ENCODE measurements at regions of chr7 and their contacts with region 1.

Region 1: GRCh38 chr7:158809596-158809995 is 19.7 kb downstream of the ESYT2 start:
- DNase-seq: peak in 2 of 9 experiments; percentile 34 to 55
- ATAC-seq: no peak
- H3K4me3 ChIP-seq: no peak overlapping the region
- H3K4me3 Mint-ChIP-seq: peak overlapping the region; percentile 31
- H3K27ac ChIP-seq: peak overlapping the region in 1 of 2 experiments; percentile 41
- H3K27ac Mint-ChIP-seq: peak overlapping the region; percentile 83
- H3K4me1 ChIP-seq: peaks cover 67% of the 10 kb centered on the region
- H3K4me1 Mint-ChIP-seq: peaks cover 77% of the 10 kb centered on the region
- H3K27me3 ChIP-seq: no peaks in the 10 kb centered on the region
- H3K27me3 Mint-ChIP-seq: no peaks in the 10 kb centered on the region
- CTCF ChIP-seq: no peak

Region 2: DNA sequence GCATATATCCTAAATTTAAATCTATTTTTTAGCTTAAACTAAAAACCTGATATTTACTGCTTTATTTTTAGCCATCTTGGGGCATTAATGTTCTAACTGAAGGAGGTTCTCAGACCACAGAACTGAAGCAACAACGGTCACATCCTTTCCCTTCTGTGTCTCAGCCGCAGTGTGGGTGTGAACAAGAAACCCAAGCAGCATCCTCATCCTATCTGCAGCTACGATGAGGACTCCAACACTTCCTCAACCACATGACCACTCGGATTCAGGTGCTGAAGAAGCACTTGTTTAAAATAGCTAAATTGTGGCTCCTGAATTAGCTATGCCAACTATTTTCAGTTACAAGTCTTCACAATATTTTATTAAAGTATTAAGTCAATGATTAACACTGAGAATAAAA is 14.4 kb after region 1 on chr7:
- CTCF ChIA-PET with region 1: interaction called, 7 read pairs
- POLR2A ChIA-PET with region 1: interaction called, 32 read pairs
- intact Hi-C with region 1: loop called (anchors 1 to 2 kb)
- DNase-seq: peak; percentile 43 to 95 (median 68)
- ATAC-seq: peak; percentile 73
- H3K4me3 ChIP-seq: no peak overlapping the region
- H3K4me3 Mint-ChIP-seq: peak overlapping the region; percentile 42
- H3K27ac ChIP-seq: peak overlapping the region; percentile 20 to 67
- H3K27ac Mint-ChIP-seq: peak overlapping the region; percentile 85
- H3K4me1 ChIP-seq: peaks cover 76% of the 10 kb centered on the region
- H3K4me1 Mint-ChIP-seq: peaks cover 73% of the 10 kb centered on the region
- H3K27me3 ChIP-seq: no peaks in the 10 kb centered on the region
- H3K27me3 Mint-ChIP-seq: no peaks in the 10 kb centered on the region
- CTCF ChIP-seq: no peak

Region 3: DNA sequence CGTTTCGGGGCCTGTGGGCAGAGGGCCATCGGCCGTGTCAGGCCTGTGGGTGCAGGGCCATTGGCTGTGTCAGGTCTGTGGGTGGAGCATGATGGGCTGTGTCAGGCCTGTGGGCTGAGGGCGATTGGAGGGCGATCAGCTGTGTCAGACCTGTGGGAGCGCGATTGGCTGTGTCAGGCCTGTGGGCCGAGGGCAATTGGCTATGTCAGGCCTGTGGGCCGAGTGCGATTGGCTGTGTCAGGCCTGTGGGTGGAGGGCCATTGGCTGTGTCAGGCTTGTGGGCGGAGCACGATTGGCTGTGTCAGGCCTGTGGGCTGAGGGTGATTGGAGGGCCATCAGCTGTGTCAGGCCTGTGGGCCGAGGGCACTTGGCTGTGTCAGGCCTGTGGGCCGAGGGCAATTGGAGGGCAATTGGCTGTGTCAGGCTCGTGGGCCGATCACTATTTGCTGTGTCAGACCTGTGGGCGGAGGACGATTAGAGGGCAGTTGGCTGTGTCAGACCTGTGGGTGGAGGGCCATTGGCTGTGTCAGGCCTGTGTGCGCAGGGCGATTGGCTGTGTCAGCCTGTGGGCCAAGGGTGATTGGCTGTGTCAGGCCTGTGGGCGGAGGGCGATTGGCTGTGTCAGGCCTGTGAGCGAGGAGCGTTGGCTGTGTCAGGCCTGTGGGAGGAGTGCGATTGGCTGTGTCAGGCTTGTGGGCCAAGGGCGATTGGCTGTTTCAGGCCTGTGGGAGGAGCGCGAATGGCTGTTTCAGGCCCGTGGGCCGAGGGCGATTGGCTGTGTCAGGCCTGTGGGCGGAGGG is 100.9 kb after region 1 on chr7:
- CTCF ChIA-PET with region 1: no interaction called
- POLR2A ChIA-PET with region 1: no interaction called
- intact Hi-C with region 1: no loop called
- DNase-seq: no peak
- ATAC-seq: no peak
- H3K4me3 ChIP-seq: no peak overlapping the region
- H3K4me3 Mint-ChIP-seq: no peak overlapping the region
- H3K27ac ChIP-seq: no peak overlapping the region
- H3K27ac Mint-ChIP-seq: no peak overlapping the region
- H3K4me1 ChIP-seq: no peaks in the 10 kb centered on the region
- H3K4me1 Mint-ChIP-seq: no peaks in the 10 kb centered on the region
- H3K27me3 ChIP-seq: no peaks in the 10 kb centered on the region
- H3K27me3 Mint-ChIP-seq: no peaks in the 10 kb centered on the region
- CTCF ChIP-seq: no peak